ENCODE measurements at regions of chr11 and their contacts with region 1.

Region 1: GRCh38 chr11:77198440-77198849 is 70.4 kb downstream of the MYO7A start:
- DNase-seq: peak; percentile 41
- ATAC-seq: peak; percentile 81
- H3K4me3 ChIP-seq: no peak overlapping the region
- H3K27ac ChIP-seq: no peak overlapping the region
- H3K4me1 ChIP-seq: no peaks in the 10 kb centered on the region
- H3K27me3 ChIP-seq: no peaks in the 10 kb centered on the region
- CTCF ChIP-seq: peak; percentile 63
- EP300 ChIP-seq: no peak
- POLR2A ChIP-seq: no peak
- RAD21 ChIP-seq: no peak

Region 2: DNA sequence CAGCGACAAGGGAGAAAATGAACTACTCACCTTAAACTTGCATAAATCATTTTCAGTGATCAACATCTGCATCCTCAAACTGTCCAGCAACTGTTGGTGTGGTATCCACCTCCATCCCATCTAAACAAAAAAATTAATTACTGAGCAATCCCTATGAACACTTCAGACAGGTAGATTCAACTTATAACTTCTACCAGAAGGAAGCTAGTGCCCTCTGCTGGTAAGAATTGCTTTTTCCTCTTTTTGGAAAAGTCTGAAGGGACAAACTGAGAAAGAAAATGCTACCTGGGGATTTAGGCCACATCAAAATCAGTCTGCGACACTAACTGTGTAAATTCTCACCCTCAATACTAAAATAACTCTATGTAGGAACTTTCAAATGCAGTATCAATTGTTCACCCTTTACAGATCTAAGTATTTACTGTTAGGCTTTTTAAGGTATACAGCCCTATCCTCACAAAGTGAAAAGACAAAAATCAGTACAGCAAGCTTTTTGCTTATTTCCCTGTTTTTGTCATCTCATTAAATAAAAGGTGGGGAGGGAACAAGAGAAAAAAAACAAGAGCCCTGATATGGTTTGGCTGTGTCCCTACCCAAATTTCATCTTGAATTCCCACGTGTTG is 421.2 kb after region 1 on chr11:
- CTCF ChIA-PET with region 1: no interaction called
- POLR2A ChIA-PET with region 1: no interaction called
- in situ Hi-C with region 1: no loop called
- intact Hi-C with region 1: loop called (anchors 5 kb)
- DNase-seq: peak; percentile 50
- ATAC-seq: no peak
- H3K4me3 ChIP-seq: no peak overlapping the region
- H3K27ac ChIP-seq: no peak overlapping the region
- H3K4me1 ChIP-seq: no peaks in the 10 kb centered on the region
- H3K27me3 ChIP-seq: no peaks in the 10 kb centered on the region
- CTCF ChIP-seq: peak; percentile 73
- EP300 ChIP-seq: no peak
- POLR2A ChIP-seq: no peak
- RAD21 ChIP-seq: peak; percentile 61; the same call in 1 of the 2 replicates